ENCODE measurements at regions of chr18 and their contacts with region 1.

Region 1: GRCh38 chr18:25351777-25352628 is at the start of gene ZNF521:
- DNase-seq: peak; percentile 85
- ATAC-seq: peak; percentile 92
- total RNA-seq, gene ZNF521: 29.6 TPM

Region 2: GRCh38 chr18:24987303-24988252 is 364.4 kb before region 1 on chr18:
- intact Hi-C with region 1: loop called (anchors 5 kb)
- DNase-seq: no peak
- ATAC-seq: peak; percentile 78

Region 3: DNA sequence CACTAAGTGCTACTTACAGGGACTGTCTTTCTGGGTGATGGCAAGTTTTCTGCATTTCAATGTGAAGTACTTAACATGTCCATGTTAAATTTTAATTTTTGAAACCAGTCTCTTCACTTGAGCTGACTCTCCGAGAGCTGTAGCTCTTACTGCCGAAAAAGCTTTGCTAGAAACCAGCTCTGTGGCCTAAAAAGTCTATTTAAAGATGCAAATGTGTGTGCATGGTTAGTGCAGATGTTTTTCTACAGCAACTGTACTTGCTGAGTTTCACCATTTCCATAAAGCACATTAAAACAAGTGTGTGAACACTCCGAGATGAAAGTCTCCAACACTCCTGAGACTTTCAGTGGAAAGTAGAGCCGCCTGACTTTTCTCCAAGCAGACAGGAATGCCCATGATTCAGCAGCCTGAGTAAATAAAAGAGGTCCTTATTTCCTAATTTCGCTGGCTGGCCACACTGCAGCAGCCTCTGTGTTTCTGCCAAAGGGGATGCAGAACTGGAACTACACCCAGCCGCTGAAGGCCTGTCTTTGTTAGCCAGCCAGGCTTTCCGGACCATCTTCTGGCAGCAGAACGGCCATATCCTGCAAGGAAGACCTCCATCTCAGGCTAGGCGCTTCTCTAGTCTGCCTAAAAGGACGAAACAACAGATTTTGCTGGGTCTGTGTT is 121.2 kb before region 1 on chr18:
- intact Hi-C with region 1: loop called (anchors 2 kb)
- DNase-seq: peak; percentile 73
- ATAC-seq: peak; percentile 92

Region 4: GRCh38 chr18:25334588-25334987 is 17.4 kb before region 1 on chr18:
- intact Hi-C with region 1: no loop called
- DNase-seq: no peak
- ATAC-seq: no peak

Region 5: DNA sequence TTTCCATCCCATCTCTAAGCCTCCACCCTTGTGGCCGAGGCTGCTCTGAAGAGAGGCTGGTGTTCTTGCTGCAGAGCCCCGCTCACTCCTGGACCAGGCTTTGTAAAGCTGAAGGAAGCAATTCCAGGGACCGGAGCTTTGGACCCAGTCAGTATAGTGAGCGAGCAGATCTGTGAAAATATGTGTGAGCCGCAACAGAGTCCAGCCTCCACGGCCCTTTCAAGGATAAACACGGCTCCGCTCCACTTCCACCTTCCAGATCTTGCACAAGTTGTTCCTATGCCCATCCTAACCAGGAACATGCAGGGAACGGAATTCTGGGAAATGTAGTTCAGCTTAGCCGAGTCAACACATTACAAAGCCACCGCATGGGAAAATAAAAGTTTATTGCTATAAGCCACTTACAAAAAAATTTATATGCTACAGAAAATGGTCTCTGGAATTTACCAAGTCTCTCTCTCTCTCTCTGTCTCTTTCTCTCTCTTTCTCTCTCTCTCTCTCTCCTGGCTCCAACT is 151.6 kb after region 1 on chr18:
- intact Hi-C with region 1: loop called (anchors 1 kb)
- DNase-seq: peak; percentile 74
- ATAC-seq: peak; percentile 96

Measured in Right ventricle myocardium inferior (tissue), 1 donor.